CD4-positive, alpha-beta T cell (primary cell): ENCODE measurements at regions of chr9 and their contacts with region 1.

Region 1: GRCh38 chr9:128103589-128103962 is 24.0 kb downstream of the PTGES2 start:
- DNase-seq: peak in 12 of 14 experiments; percentile 21 to 69 (median 44)
- ATAC-seq: peak; percentile 78
- H3K4me3 ChIP-seq: no peak overlapping the region
- H3K4me3 Mint-ChIP-seq: no peak overlapping the region
- H3K27ac ChIP-seq: peak overlapping the region in 1 of 2 donors; percentile 23
- H3K27ac Mint-ChIP-seq: peak overlapping the region; percentile 74
- H3K4me1 ChIP-seq: peaks cover 56% of the 10 kb centered on the region
- H3K4me1 Mint-ChIP-seq: peaks cover 44% of the 10 kb centered on the region
- H3K27me3 ChIP-seq: no peaks in the 10 kb centered on the region
- H3K27me3 Mint-ChIP-seq: no peaks in the 10 kb centered on the region
- CTCF ChIP-seq: peak; percentile 56

Region 2: GRCh38 chr9:128055344-128056040 is 48.1 kb before region 1 on chr9:
- CTCF ChIA-PET with region 1: no interaction called
- POLR2A ChIA-PET with region 1: no interaction called
- intact Hi-C with region 1: loop called in 1 of 2 experiments (anchors 10 kb)
- DNase-seq: no peak
- ATAC-seq: no peak
- H3K4me3 ChIP-seq: no peak overlapping the region
- H3K4me3 Mint-ChIP-seq: no peak overlapping the region
- H3K27ac ChIP-seq: no peak overlapping the region
- H3K27ac Mint-ChIP-seq: no peak overlapping the region
- H3K4me1 ChIP-seq: peaks cover 5% of the 10 kb centered on the region
- H3K4me1 Mint-ChIP-seq: no peaks in the 10 kb centered on the region
- H3K27me3 ChIP-seq: no peaks in the 10 kb centered on the region
- H3K27me3 Mint-ChIP-seq: no peaks in the 10 kb centered on the region
- CTCF ChIP-seq: no peak

Region 3: DNA sequence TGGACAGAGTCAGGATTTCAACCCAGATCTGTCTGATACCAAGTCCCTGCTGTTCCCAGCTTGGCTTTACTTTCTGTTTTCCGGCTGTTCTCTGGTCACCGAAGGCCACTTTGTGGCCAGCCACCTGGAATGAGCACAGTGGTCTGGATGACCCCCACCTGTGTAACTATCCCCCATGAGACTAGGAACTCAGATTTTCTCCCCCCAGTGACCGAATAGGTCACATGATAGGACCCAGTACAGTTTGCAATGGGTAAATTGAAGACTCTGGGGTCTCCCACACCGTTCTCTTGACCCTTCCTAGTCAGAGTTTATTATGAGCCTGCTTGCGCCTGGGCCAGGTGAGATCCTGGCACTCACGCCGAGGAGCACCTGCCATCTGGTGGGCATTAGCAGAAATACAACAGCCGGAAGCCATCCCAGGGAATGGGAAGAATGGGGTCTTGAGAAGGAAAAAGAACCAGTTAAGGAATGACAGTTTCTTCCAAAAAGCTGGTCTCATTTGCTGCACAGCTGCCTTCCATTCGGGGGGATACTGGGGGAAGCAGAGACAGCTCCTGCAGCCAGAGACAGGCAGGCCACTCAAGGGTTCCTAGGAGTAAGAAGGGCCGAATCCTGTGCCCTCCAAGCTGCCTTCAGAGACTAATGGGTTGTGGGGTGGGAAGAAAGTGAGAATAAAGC is 824.3 kb after region 1 on chr9:
- CTCF ChIA-PET with region 1: no interaction called
- POLR2A ChIA-PET with region 1: no interaction called
- intact Hi-C with region 1: no loop called
- DNase-seq: peak; percentile 38 to 77 (median 46)
- ATAC-seq: peak; percentile 84
- H3K4me3 ChIP-seq: no peak overlapping the region
- H3K4me3 Mint-ChIP-seq: no peak overlapping the region
- H3K27ac ChIP-seq: no peak overlapping the region
- H3K27ac Mint-ChIP-seq: no peak overlapping the region
- H3K4me1 ChIP-seq: peaks cover 16% of the 10 kb centered on the region
- H3K4me1 Mint-ChIP-seq: peaks cover 19% of the 10 kb centered on the region
- H3K27me3 ChIP-seq: no peaks in the 10 kb centered on the region
- H3K27me3 Mint-ChIP-seq: no peaks in the 10 kb centered on the region
- CTCF ChIP-seq: peak; percentile 98